AG04449 (cell line): ENCODE measurements at regions of chr7 and their contacts with region 1.

Region 1: DNA sequence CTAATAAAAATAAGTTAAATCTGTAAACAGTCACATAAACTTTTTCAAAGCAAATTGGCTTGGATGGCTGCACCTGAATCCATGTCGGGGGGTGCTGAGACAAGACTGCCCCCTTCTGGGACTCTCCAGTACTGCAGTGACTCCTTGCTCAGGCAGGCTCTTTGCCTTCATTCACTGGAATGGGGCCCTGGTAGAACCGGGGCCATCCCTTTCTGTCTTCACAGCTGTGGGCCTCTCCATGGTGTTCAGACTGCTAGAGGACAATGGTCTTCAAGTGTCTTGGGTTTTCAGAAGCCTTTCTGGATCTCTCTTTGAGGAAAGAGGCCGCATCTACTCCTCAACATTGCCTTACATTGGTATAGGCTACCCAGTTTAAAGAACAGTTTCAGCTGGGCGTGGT is 16.1 kb upstream of the IMPDH1 start:
- DNase-seq: no peak
- H3K4me3 ChIP-seq: no peak overlapping the region
- CTCF ChIP-seq: peak; percentile 89

Region 2: GRCh38 chr7:128104035-128104742 is 321.7 kb before region 1 on chr7:
- CTCF ChIA-PET with region 1: no interaction called
- POLR2A ChIA-PET with region 1: no interaction called
- DNase-seq: no peak
- H3K4me3 ChIP-seq: peak overlapping the region; percentile 49
- CTCF ChIP-seq: no peak

Region 3: GRCh38 chr7:128231021-128231420 is 194.8 kb before region 1 on chr7:
- CTCF ChIA-PET with region 1: no interaction called
- POLR2A ChIA-PET with region 1: no interaction called
- DNase-seq: no peak
- H3K4me3 ChIP-seq: no peak overlapping the region
- CTCF ChIP-seq: no peak

Region 4: DNA sequence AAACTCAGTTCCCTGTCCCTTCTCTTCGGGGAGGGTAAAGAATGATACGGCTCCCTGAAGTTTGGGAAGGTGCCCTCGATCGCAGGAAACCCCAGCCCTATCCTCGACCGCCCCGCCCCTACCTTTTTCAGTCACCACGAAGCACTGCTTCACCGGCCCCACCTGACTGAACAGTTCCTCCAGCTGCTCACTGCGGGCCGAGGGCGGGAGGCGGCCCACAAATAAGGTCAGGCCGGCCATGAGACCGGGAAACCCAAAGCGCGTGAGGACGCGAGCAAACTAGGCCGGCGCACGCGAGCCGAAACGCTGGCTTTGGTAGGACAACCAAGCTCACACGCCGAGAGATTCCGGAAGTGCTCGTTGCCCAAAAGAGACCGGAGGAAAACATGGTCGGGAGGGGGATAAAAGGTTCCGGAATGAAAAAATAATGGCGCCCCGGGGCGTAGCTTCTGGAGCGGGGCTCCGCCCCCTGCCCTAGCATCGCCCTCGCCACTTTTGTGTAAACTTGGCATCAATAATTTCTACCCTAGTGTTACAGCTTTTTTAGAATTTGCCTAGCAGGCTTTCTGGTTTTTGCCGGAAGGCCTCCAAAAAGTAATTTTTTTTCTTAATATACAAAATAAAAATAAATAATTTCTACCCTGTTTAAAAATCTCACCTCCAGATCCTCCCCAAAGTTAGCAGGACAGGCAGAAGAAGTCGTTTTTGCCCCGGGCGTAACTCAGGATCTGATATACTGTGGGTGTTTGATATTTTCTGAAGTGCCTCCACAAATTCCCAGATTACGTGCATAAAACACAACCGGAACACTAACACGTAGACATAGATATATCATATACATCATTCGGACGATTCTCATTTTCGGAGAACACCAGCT is 82.1 kb before region 1 on chr7 and contains the start of gene RBM28:
- CTCF ChIA-PET with region 1: interaction called, 99 read pairs
- POLR2A ChIA-PET with region 1: no interaction called
- DNase-seq: peak; percentile 40
- H3K4me3 ChIP-seq: peak within 1 kb of the TSS; percentile 90
- CTCF ChIP-seq: no peak

Region 5: GRCh38 chr7:128387216-128388144 is 38.4 kb before region 1 on chr7:
- CTCF ChIA-PET with region 1: interaction called, 229 read pairs
- POLR2A ChIA-PET with region 1: no interaction called
- DNase-seq: no peak
- H3K4me3 ChIP-seq: no peak overlapping the region
- CTCF ChIP-seq: peak; percentile 89

Region 6: DNA sequence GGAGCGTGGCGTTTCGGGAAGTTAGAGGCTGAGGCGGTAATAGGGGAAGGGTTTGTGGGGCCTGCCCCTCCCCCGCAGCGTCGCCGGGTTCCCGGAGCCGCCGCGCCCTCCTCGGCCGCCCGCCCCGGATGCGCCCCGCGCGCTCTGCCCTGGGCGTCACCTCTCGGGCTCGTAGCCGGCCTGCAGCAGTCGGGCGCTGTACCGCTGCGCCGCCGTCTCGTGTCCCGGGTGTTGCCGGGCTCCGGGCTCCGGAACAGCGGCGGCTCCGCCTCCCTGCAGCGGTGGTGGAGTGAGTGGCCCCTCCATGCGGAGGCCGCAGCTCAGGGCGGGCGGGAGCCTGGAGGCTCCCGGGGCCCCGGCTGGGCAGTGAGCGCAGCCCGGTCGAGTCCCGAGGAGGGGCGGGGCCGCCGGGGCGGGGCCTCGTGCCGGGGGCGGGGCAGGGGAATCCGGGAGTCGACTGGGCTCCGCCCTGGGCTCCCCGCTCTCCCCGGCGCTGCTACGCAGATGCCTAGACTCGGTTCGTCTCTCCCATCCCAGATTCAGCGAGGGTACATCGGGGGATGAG is 16.2 kb before region 1 on chr7 and contains the start of gene IMPDH1:
- CTCF ChIA-PET with region 1: interaction called, 229 read pairs
- POLR2A ChIA-PET with region 1: no interaction called
- DNase-seq: no peak
- H3K4me3 ChIP-seq: peak within 1 kb of the TSS; percentile 85
- CTCF ChIP-seq: no peak

Region 7: GRCh38 chr7:128437426-128438332 is 11.8 kb after region 1 on chr7:
- CTCF ChIA-PET with region 1: interaction called, 106 read pairs
- POLR2A ChIA-PET with region 1: no interaction called
- DNase-seq: no peak
- H3K4me3 ChIP-seq: no peak overlapping the region
- CTCF ChIP-seq: no peak

Region 8: GRCh38 chr7:128455551-128456254 is 29.9 kb after region 1 on chr7 and contains the start of gene HILPDA:
- CTCF ChIA-PET with region 1: interaction called, 569 read pairs
- POLR2A ChIA-PET with region 1: interaction called, 3 read pairs
- DNase-seq: peak; percentile 82
- H3K4me3 ChIP-seq: peak within 1 kb of the TSS; percentile 99
- CTCF ChIP-seq: no peak

Region 9: DNA sequence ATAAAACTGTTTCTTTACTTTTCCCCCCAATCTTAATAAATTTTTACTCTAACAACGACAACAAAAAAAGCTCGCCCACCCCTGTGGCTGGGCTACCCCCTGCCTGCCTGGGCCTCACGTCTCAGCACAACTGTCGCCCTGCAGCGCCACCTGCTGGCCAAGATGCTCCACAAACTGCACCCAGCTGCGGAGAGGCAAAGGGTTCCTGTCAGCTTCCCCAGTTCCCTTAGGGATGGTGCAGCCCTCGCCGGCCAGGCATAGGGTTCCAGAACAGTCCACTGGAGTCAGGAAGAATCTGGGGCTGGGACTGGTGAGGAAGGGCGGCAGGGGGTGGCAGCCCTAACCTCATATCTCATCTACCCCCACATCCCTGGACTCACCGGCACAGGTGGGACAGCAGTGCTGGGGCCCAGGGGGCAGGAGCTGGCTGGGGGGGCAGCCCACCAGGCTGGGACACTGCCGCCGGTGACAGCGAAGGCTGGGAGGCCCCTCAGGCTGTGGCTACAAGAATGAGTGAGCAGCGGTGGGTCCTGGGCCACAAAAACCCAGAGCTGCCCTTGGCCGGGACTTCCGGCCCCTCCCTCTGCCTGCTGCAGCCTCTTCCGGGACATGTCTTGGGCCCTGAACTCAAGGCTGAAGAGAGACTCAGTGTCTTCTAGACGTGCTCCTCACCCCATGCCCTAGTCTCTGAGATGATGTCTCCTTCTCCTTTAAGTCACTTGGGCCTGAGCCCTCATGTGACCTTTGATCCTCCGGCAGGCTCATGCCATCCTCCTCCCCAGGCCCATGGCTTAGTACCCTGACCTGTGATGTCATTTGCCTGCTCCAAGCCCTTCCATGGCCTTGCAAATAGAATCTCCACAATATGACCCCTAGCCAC is 458.0 kb after region 1 on chr7:
- CTCF ChIA-PET with region 1: interaction called, 36 read pairs
- POLR2A ChIA-PET with region 1: no interaction called
- DNase-seq: no peak
- H3K4me3 ChIP-seq: no peak overlapping the region
- CTCF ChIP-seq: peak; percentile 97